Gastrocnemius medialis (tissue), 4 donors: ENCODE measurements at regions of chr18 and their contacts with region 1.

Region 1: GRCh38 chr18:36828630-36829361 is at the starts of genes KIAA1328 and TPGS2:
- DNase-seq: peak; percentile 66 to 71
- ATAC-seq: peak; percentile 89 to 92
- H3K4me3 ChIP-seq: peak within 1 kb of the TSS; percentile 82 to 98 (median 91)
- H3K27ac ChIP-seq: peak within 1 kb of the TSS; percentile 80 to 84 (median 82)
- H3K4me1 ChIP-seq: peaks cover 14 to 18% of the 10 kb centered on the region in 2 donors
- H3K27me3 ChIP-seq: no peaks in the 10 kb centered on the region
- CTCF ChIP-seq: peak in 2 of 5 experiments; percentile 30 to 36
- POLR2A ChIP-seq: peak; percentile 33 to 43
- total RNA-seq, gene KIAA1328: 3.4 to 8.3 (median 6.6) TPM
- total RNA-seq, gene TPGS2: 20.7 to 36.5 (median 28.2) TPM

Region 2: DNA sequence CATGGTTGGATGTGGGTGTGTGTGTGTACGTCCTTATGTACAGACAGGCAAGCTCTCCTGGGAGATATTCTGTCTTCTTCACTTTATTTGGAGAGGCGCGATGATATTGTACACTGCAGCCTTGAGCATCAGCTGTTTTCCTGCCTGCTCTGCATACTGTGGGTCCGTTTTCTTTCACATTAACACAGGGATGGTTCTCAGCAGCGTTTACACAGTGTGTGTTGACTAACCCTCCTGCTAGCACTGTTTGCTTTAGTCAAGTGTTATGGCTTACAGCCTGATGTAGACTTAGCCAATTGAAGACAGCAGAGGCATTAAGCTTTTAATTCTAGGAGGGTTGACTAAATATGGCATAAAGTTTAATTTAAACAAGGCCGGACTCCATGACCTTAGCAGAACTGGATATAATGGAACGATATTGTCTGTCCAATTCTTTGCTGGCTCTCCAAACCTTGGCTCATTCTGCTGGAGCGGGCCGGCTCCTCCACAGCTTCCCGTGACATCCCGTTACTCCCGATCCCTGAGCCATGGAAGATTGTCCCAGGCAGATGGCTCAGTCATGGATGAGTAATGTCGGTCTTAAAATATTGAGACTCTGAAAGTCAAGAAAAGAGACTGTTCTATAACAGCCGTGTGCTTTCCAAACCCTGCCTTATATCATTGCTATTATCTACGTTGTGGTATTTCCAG is 134.7 kb before region 1 on chr18:
- in situ Hi-C with region 1: no loop called
- intact Hi-C with region 1: loop called (anchors 2 kb)
- DNase-seq: no peak
- ATAC-seq: no peak
- H3K4me3 ChIP-seq: no peak overlapping the region
- H3K27ac ChIP-seq: no peak overlapping the region
- H3K4me1 ChIP-seq: peaks cover 6% of the 10 kb centered on the region in 2 donors
- H3K27me3 ChIP-seq: no peaks in the 10 kb centered on the region
- CTCF ChIP-seq: no peak
- POLR2A ChIP-seq: no peak